ENCODE measurements at regions of chrX and their contacts with region 1.

Region 1: DNA sequence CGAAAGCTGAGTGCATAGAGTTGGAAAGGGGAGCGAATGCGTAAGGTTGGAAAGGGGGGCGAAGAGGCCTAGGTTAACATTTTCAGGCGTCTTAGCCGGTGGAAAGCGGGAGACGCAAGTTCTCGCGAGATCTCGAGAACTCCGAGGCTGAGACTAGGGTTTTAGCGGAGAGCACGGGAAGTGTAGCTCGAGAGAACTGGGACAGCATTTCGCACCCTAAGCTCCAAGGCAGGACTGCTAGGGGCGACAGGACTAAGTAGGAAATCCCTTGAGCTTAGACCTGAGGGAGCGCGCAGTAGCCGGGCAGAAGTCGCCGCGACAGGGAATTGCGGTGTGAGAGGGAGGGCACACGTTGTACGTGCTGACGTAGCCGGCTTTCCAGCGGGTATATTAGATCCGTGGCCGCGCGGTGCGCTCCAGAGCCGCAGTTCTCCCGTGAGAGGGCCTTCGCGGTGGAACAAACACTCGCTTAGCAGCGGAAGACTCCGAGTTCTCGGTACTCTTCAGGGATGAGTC is at the start of gene DDX3X:
- DNase-seq: peak; percentile 76
- ATAC-seq: peak; percentile 59
- H3K4me3 Mint-ChIP-seq: peak within 1 kb of the TSS; percentile 93
- H3K27ac Mint-ChIP-seq: peak within 1 kb of the TSS; percentile 99
- H3K4me1 Mint-ChIP-seq: peaks cover 44% of the 10 kb centered on the region
- H3K27me3 Mint-ChIP-seq: no peaks in the 10 kb centered on the region
- CTCF ChIP-seq: no peak
- total RNA-seq, gene DDX3X: 225 and 247 TPM in 2 replicates

Region 2: DNA sequence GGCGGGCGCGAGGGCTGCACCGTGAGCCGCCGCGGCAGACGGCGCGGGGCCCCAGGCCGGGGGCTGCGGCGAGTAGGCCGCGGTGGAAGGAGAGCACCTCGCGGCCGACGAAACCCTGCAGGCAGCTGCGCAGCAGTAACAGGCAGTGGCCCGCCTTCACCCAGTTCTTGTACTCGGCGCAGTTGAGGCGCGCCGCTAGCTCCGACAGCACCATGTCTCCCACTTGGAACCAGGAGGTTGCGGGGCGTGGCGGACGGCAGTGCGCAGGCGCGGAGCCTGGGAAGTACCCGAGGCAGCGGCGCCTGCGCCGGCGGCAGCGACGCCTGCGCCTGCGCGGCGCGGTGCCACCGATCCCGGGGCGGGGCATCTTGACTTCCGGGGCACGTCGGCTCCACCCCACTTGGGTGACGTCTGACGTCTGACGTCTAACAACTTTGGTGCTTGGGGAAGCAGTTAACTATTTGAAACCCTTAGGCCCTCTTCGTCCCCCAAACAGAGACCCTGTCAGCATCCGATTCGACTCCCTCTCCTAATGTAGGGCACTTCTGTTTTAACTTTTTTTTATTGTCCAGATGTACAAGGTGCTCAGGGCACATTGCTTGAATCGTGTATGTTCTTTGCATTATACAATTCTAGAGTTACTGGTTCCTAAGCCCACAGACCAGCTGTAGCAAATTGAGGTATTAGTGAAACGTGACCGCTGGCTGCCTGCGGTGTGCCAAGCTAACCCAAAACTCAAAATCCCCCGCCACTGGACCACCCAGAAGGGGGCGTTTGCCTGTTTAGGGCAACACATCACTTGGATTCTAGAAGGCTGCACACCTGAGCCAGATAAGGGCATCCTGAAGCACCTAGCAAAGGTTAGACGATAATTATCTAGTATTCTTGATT is 686.2 kb before region 1 on chrX and contains the start of gene CXorf38:
- CTCF ChIA-PET with region 1: no interaction called
- POLR2A ChIA-PET with region 1: interaction called, 3 read pairs
- intact Hi-C with region 1: loop called (anchors 2 kb)
- DNase-seq: peak; percentile 83
- ATAC-seq: peak; percentile 67
- H3K4me3 Mint-ChIP-seq: peak within 1 kb of the TSS; percentile 94
- H3K27ac Mint-ChIP-seq: peak within 1 kb of the TSS; percentile 93
- H3K4me1 Mint-ChIP-seq: peaks cover 39% of the 10 kb centered on the region
- H3K27me3 Mint-ChIP-seq: no peaks in the 10 kb centered on the region
- CTCF ChIP-seq: no peak
- total RNA-seq, gene CXorf38: 20.9 and 21.9 TPM in 2 replicates

Region 3: DNA sequence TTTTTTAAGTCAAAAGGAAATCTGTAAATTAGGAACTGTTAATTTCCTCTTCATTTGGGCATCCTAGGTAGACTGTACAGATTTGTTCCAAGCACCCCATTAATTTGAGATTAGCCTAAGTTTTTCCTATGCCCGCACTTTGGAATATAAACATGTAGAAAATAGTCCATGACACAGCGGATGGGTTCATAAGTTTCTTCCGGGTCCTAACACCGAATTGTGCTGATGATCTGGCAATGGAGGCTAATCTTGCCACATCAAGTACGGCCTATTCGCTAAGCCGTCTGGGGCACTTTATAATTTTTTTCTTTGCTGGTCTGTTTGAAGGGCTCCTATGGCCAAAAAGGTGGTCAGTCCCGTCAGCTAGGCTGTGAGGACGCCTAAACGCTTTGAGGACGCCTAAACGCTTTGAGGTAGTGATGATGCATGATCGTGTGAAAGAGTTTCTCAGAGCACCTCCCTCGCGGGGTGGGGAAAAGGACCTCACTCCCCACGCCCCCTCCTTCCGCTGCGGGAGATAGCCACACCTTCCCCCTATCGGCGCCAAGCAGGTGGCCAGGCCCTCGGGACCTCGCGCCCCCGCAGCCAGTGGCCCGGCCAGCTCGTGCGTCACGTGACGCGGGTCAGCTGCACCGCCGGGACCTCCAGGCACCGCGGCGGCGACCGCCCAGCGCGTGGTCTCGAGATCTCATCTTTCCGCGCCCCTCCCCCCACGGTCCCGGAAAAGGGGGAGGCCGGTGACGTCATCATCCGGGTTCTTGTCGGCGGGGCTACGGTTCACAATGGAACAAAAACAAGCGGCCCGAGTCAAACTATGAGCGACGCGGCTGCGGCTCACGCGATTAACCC is 249.5 kb before region 1 on chrX:
- CTCF ChIA-PET with region 1: no interaction called
- POLR2A ChIA-PET with region 1: interaction called, 10 read pairs
- intact Hi-C with region 1: no loop called
- DNase-seq: peak; percentile 94
- ATAC-seq: peak; percentile 64
- H3K4me3 Mint-ChIP-seq: peak overlapping the region; percentile 90
- H3K27ac Mint-ChIP-seq: peak overlapping the region; percentile 99
- H3K4me1 Mint-ChIP-seq: peaks cover 36% of the 10 kb centered on the region
- H3K27me3 Mint-ChIP-seq: no peaks in the 10 kb centered on the region
- CTCF ChIP-seq: no peak

Region 4: DNA sequence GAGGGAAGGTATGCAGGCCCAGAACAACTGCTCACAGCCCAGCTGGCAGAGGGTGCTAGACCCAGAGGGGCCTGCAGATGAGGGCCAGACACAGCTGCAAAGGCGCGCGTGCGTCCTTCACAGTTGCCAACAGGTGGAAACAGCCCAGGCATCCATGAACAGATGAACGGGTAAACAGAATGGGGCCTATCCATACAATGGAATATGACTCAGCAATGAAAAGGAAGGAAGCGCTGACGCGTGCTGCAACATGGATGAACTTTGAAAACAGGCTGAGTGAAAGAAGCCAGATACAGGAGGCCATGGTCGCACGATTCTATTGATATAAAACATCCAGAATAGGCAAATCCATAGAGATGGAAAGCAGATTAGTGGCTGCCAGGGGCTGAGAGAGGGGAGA is 82.9 kb before region 1 on chrX:
- CTCF ChIA-PET with region 1: no interaction called
- POLR2A ChIA-PET with region 1: no interaction called
- intact Hi-C with region 1: loop called (anchors 5 kb)
- DNase-seq: no peak
- ATAC-seq: no peak
- H3K4me3 Mint-ChIP-seq: no peak overlapping the region
- H3K27ac Mint-ChIP-seq: no peak overlapping the region
- H3K4me1 Mint-ChIP-seq: peaks cover 7% of the 10 kb centered on the region
- H3K27me3 Mint-ChIP-seq: no peaks in the 10 kb centered on the region
- CTCF ChIP-seq: no peak

Region 5: GRCh38 chrX:41350976-41351569 is 17.3 kb after region 1 on chrX:
- CTCF ChIA-PET with region 1: no interaction called
- POLR2A ChIA-PET with region 1: interaction called, 4 read pairs
- intact Hi-C with region 1: loop called (anchors 2 kb)
- DNase-seq: no peak
- ATAC-seq: no peak
- H3K4me3 Mint-ChIP-seq: no peak overlapping the region
- H3K27ac Mint-ChIP-seq: peak overlapping the region; percentile 50
- H3K4me1 Mint-ChIP-seq: peaks cover 13% of the 10 kb centered on the region
- H3K27me3 Mint-ChIP-seq: no peaks in the 10 kb centered on the region
- CTCF ChIP-seq: no peak

Region 6: DNA sequence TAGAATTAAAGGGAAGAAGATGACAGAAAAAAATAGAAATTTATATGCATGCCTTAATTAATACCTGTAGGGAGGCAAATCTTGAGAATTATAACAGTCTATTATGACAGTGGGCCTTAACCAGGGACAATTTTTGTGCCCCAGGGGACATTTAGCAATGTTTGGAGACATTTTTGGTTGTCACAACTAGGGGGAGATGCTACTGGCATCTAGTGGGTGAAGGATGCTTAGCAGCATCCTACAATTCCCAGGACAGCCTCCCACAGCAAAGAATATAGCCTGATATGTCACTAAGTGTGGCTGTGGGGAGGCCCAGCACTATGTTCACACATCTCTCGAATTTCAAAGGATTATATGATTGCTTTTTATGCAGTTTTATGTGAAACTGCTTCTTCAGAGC is 400.7 kb after region 1 on chrX:
- CTCF ChIA-PET with region 1: no interaction called
- POLR2A ChIA-PET with region 1: no interaction called
- intact Hi-C with region 1: loop called (anchors 5 kb)
- DNase-seq: no peak
- ATAC-seq: peak; percentile 35
- H3K4me3 Mint-ChIP-seq: peak overlapping the region; percentile 75
- H3K27ac Mint-ChIP-seq: peak overlapping the region; percentile 85
- H3K4me1 Mint-ChIP-seq: peaks cover 41% of the 10 kb centered on the region
- H3K27me3 Mint-ChIP-seq: no peaks in the 10 kb centered on the region
- CTCF ChIP-seq: no peak